Endothelial cell of umbilical vein (primary cell): ENCODE measurements at regions of chr17 and their contacts with region 1.

Region 1: DNA sequence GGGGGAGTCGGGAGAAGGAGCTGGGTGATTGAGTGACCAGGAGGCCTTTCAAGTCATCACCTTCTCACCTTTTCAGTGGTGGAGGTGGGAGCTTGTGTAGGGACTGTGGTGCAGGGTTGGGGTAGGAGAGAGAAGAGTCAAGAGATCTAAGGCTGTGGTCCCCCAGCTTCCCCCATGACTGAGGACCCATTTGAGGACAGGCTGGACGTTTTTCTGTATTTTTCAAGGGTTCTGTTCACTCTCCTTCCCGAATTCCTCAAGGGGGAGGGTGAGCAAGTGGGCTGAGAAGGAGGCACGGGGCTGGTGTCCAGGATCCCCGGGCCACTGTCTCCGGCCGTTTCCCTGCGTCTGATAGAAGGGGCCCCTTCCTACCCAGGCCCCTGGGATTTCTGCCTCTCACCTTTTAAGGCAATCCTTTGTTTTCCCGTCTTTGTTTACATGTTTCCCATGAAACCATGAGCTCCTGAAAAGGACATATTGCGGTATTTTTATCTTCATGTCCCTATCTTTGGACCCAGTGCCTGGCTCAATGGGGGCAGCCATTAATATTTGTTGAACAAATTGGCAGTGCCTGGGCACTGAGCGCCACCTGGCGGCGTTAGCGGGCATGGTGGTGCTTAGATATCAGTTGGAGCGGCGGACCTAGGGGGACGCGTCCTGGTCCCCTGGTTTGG is 9.2 kb upstream of the CD300A start:
- DNase-seq: peak; percentile 44
- H3K4me3 ChIP-seq: no peak overlapping the region
- H3K27ac ChIP-seq: no peak overlapping the region
- H3K4me1 ChIP-seq: peaks cover 3% of the 10 kb centered on the region
- H3K27me3 ChIP-seq: no peaks in the 10 kb centered on the region
- CTCF ChIP-seq: peak; percentile 88 to 89
- POLR2A ChIP-seq: no peak

Region 2: DNA sequence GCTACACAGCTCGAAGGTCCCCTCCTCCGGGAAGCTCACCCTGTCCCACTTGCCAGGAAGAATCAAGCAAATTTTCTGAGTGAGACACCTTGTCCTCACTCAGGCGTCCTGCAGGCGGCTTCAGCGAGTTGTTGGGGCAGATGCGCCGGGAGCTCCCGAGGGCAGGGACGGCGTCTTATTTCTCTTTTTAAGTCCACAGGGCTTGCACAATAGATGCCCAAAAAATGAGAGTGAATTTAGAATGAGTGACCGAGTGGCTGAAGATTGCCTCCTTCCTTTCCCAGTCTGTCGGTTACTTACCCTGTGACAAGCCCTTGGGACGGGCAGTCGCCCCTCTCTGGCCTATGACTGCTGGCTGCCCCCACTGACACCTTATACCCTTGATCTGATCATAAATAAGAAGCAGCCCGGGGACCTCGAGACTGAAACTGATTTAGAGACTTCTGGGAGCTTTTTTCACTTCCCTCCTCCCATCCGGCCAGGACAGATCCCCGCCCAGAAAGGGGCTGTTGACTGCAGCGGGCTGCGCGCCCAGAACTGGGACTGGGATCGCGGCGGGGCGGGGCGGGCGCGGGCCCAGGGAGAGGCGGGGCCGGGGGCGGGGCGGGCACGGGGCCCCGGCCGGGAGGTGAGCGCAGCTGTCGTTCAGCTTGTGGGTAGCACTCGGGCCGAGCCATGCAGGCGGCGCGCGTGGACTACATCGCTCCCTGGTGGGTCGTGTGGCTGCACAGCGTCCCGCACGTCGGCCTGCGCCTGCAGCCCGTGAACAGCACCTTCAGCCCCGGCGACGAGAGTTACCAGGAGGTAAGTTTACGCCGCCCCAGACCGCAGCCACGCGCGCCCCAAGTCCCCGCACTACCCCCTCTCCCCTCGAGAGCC is 244.1 kb before region 1 on chr17 and contains the start of gene TTYH2:
- CTCF ChIA-PET with region 1: interaction called, 3 read pairs
- POLR2A ChIA-PET with region 1: no interaction called
- dilution Hi-C with region 1: no loop called
- intact Hi-C with region 1: loop called (anchors 1 kb)
- DNase-seq: peak; percentile 73
- H3K4me3 ChIP-seq: peak within 1 kb of the TSS; percentile 41 to 76 (median 50)
- H3K27ac ChIP-seq: no peak within 1 kb of the TSS
- H3K4me1 ChIP-seq: peaks cover 17% of the 10 kb centered on the region
- H3K27me3 ChIP-seq: no peaks in the 10 kb centered on the region
- CTCF ChIP-seq: peak in 1 of 2 donors; percentile 32
- POLR2A ChIP-seq: no peak
- total RNA-seq, gene TTYH2: 0.75 and 1.1 TPM in 2 replicates

Region 3: DNA sequence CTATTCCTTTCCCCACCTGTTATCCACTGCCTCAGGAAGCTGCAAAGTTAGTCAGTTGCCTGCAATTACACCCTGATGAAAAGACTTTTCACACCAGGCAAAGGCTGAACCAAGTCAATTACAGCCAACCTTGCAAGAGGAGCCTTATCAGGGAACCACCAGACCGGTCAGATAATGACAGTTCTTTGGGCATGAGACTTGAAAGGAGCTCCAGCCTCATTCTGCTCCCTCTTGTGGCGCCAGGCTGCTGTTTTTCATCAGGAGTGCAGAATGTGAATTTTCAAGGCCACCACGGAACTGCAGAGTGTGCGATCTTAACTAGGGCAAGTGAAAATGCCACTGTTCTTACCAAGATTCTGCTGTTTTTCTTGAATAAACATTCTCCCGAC is 160.7 kb before region 1 on chr17:
- CTCF ChIA-PET with region 1: interaction called, 10 read pairs
- POLR2A ChIA-PET with region 1: no interaction called
- dilution Hi-C with region 1: no loop called
- intact Hi-C with region 1: loop called (anchors 1 kb)
- DNase-seq: peak; percentile 7
- H3K4me3 ChIP-seq: no peak overlapping the region
- H3K27ac ChIP-seq: no peak overlapping the region
- H3K4me1 ChIP-seq: no peaks in the 10 kb centered on the region
- H3K27me3 ChIP-seq: peaks cover 0 to 2% of the 10 kb centered on the region in 2 experiments
- CTCF ChIP-seq: peak; percentile 10 to 44
- POLR2A ChIP-seq: no peak

Region 4: GRCh38 chr17:74305865-74306654 is 151.2 kb before region 1 on chr17:
- CTCF ChIA-PET with region 1: interaction called, 12 read pairs
- POLR2A ChIA-PET with region 1: no interaction called
- dilution Hi-C with region 1: no loop called
- intact Hi-C with region 1: loop called (anchors 1 kb)
- DNase-seq: no peak
- H3K4me3 ChIP-seq: no peak overlapping the region
- H3K27ac ChIP-seq: no peak overlapping the region
- H3K4me1 ChIP-seq: no peaks in the 10 kb centered on the region
- H3K27me3 ChIP-seq: no peaks in the 10 kb centered on the region
- CTCF ChIP-seq: no peak
- POLR2A ChIP-seq: no peak

Region 5: GRCh38 chr17:74373838-74374606 is 83.3 kb before region 1 on chr17:
- CTCF ChIA-PET with region 1: interaction called, 221 read pairs
- POLR2A ChIA-PET with region 1: no interaction called
- dilution Hi-C with region 1: no loop called
- intact Hi-C with region 1: loop called (anchors 1 kb)
- DNase-seq: no peak
- H3K4me3 ChIP-seq: no peak overlapping the region
- H3K27ac ChIP-seq: no peak overlapping the region
- H3K4me1 ChIP-seq: no peaks in the 10 kb centered on the region
- H3K27me3 ChIP-seq: no peaks in the 10 kb centered on the region
- CTCF ChIP-seq: no peak
- POLR2A ChIP-seq: no peak

Region 6: GRCh38 chr17:74493381-74493833 is 36.1 kb after region 1 on chr17:
- CTCF ChIA-PET with region 1: interaction called, 3 read pairs
- POLR2A ChIA-PET with region 1: no interaction called
- dilution Hi-C with region 1: no loop called
- intact Hi-C with region 1: loop called (anchors 1 kb)
- DNase-seq: peak; percentile 38
- H3K4me3 ChIP-seq: no peak overlapping the region
- H3K27ac ChIP-seq: no peak overlapping the region
- H3K4me1 ChIP-seq: no peaks in the 10 kb centered on the region
- H3K27me3 ChIP-seq: no peaks in the 10 kb centered on the region
- CTCF ChIP-seq: peak; percentile 72 to 73
- POLR2A ChIP-seq: no peak